HCT116 (cell line): ENCODE measurements at regions of chr2 and their contacts with region 1.

Region 1: GRCh38 chr2:200471324-200471848 is 38.5 kb downstream of the KCTD18 start:
- DNase-seq: peak; percentile 6
- ATAC-seq: peak; percentile 84
- H3K4me3 ChIP-seq: no peak overlapping the region
- H3K27ac ChIP-seq: no peak overlapping the region
- H3K4me1 ChIP-seq: no peaks in the 10 kb centered on the region
- H3K27me3 ChIP-seq: no peaks in the 10 kb centered on the region
- CTCF ChIP-seq: peak; percentile 62 to 72 (median 62); a peak in 5 of 6 replicates
- POLR2A ChIP-seq: no peak
- RAD21 ChIP-seq: peak; percentile 87

Region 2: GRCh38 chr2:199985625-199986207 is 485.7 kb before region 1 on chr2:
- CTCF ChIA-PET with region 1: interaction called, 9 read pairs
- POLR2A ChIA-PET with region 1: no interaction called
- RAD21 ChIA-PET with region 1: no interaction called
- intact Hi-C with region 1: loop called (anchors 1 kb)
- DNase-seq: peak; percentile 81
- ATAC-seq: peak; percentile 97
- H3K4me3 ChIP-seq: no peak overlapping the region
- H3K27ac ChIP-seq: no peak overlapping the region
- H3K4me1 ChIP-seq: peaks cover 0 to 8% of the 10 kb centered on the region in 2 experiments; a peak in 2 of 4 replicates
- H3K27me3 ChIP-seq: no peaks in the 10 kb centered on the region
- CTCF ChIP-seq: peak; percentile 73 to 93 (median 90)
- POLR2A ChIP-seq: no peak
- RAD21 ChIP-seq: peak; percentile 85

Region 3: GRCh38 chr2:200306196-200306930 is 165.0 kb before region 1 on chr2 and contains the start of gene SPATS2L:
- CTCF ChIA-PET with region 1: interaction called, 4 read pairs
- POLR2A ChIA-PET with region 1: no interaction called
- RAD21 ChIA-PET with region 1: no interaction called
- intact Hi-C with region 1: loop called (anchors 5 kb)
- DNase-seq: peak; percentile 22
- ATAC-seq: peak; percentile 71
- H3K4me3 ChIP-seq: peak within 1 kb of the TSS; percentile 63 to 64
- H3K27ac ChIP-seq: peak within 1 kb of the TSS; percentile 84
- H3K4me1 ChIP-seq: peaks cover 45 to 78% of the 10 kb centered on the region in 2 experiments
- H3K27me3 ChIP-seq: no peaks in the 10 kb centered on the region
- CTCF ChIP-seq: no peak
- POLR2A ChIP-seq: no peak
- RAD21 ChIP-seq: no peak
- total RNA-seq, gene SPATS2L: 87.1 TPM